Right ventricle myocardium superior (tissue), 1 donor: ENCODE measurements at regions of chr9 and their contacts with region 1.

Region 1: DNA sequence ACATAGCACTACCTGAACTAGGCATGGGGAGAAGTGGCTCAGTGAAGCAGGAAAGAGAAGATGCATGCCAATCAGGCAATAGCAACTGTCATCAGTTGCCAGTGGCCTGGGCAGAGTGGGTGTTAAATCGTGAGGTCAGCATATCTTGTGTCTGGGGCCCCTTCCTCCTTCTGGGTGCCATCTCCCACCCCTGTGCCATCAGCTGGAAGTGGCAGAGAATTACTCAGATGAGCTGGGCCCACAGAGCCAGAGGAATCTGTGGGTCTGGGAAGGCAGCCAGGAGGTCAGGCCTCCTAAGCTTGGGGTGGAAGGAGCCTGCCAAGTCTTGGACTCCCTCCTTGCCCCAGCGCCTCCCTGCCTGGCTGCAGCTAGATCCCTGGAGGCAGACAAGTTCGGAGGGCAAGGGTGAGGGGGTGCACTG is 66.5 kb downstream of the GALNT12 start:
- DNase-seq: peak; percentile 82
- ATAC-seq: peak; percentile 89

Region 2: DNA sequence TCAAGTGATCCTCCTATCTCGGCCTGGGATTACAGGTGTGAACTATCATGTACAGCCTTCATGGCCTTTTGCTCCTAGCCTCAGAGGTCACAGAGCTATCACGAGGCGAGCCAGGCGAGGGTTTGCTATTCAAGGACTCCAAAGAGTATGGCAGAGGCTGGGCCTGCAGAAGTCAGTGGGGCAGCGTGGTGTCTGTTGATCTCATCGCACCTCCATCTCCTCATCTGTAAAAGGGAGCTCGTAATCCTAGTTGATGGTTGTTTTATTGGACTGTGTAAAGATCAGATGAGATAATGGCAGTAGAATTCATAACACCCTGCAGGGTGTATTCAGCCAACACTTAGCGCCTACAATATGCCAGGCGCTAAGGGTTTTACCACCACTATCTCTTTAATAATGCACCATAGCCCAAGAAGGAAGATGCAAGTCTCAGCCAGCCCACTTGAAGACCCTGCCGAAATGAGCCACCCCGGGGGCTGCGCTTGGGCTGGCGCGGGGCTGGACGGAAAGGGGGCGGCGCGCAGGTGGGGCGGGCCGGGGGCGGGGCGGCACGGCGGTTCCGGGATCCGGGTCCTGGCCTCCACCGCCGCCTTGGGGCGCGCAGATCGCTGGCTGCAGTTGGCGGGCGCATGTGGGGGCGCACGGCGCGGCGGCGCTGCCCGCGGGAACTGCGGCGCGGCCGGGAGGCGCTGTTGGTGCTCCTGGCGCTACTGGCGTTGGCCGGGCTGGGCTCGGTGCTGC is 66.7 kb before region 1 on chr9 and contains the start of gene GALNT12:
- intact Hi-C with region 1: no loop called
- DNase-seq: peak; percentile 51
- ATAC-seq: peak; percentile 76
- total RNA-seq, gene GALNT12: 0.43 TPM

Region 3: DNA sequence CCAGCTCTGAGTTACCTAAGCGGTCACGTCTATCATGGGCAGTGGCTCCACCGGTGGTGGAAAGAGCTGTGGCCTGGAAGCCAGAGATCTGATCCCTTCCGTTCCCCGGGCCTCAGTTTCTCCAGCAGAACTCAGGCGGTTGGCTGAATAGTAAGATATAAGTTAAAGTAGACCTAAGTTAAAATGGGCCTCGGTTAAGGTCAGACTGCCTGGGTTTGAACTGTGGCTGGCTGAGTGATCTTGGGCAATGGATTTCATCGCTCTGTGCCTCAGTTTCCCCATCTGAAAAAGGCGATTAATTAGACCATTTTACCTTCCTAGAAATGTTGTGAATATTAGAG is 70.7 kb after region 1 on chr9:
- intact Hi-C with region 1: loop called (anchors 5 kb)
- DNase-seq: no peak
- ATAC-seq: no peak

Region 4: GRCh38 chr9:99019790-99020331 is 145.9 kb after region 1 on chr9:
- intact Hi-C with region 1: no loop called
- DNase-seq: no peak
- ATAC-seq: peak; percentile 28